Caco-2 (cell line): ENCODE measurements at regions of chr1 and their contacts with region 1.

Region 1: DNA sequence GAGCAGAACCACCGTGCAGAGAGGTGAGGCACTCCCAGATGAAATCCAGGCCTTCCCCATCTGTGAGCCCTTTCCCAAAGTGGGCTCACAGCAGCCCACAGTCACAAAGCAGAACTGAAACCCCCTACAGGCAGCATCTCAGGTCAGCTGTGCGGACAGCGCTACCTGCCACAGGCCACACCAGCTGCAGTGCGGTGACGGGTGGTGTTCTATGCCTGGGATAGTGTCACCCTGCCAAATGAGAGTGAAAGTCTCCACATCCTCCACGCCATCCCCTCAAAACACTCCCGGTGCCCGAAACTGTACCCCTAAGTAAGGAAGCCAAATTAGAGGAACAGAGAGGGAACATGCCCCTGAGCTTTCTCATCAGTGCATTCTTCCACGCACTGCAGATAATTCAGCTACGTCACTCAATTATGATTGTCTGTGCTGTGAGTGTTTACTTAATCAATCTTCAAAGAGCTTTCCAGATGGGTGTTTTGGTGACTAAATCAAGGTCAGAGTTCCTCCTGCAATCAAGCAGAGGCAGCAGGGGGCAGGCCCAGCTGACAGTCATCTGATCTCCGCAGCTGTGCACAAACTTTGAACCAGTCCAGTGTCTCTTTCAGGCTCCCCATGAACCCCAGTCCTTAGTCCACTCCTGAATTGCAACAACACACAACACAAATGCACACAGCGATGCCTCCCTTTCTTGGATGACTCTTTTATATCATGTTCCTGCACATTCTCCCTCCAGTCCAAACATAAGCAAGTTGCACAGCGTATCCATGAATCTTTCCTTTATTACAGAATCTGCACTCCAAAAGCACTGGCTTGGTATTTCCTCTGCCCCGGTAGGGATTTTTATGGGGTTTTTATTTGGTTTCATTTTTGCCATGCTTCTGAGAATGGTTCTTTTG is 150.0 kb downstream of the TOMM20 start:
- DNase-seq: peak; percentile 71 to 74
- H3K4me3 ChIP-seq: no peak overlapping the region
- H3K4me3 Mint-ChIP-seq: no peak overlapping the region
- H3K27ac Mint-ChIP-seq: peak overlapping the region; percentile 94
- H3K4me1 ChIP-seq: peaks cover 74% of the 10 kb centered on the region
- H3K4me1 Mint-ChIP-seq: peaks cover 66% of the 10 kb centered on the region
- H3K27me3 ChIP-seq: no peaks in the 10 kb centered on the region
- H3K27me3 Mint-ChIP-seq: no peaks in the 10 kb centered on the region
- CTCF ChIP-seq: peak; percentile 9 to 20

Region 2: GRCh38 chr1:234638832-234639799 is 339.5 kb before region 1 on chr1:
- CTCF ChIA-PET with region 1: no interaction called
- POLR2A ChIA-PET with region 1: no interaction called
- intact Hi-C with region 1: loop called (anchors 2 kb)
- DNase-seq: peak; percentile 90 to 93
- H3K4me3 ChIP-seq: no peak overlapping the region
- H3K4me3 Mint-ChIP-seq: peak overlapping the region; percentile 59
- H3K27ac Mint-ChIP-seq: peak overlapping the region; percentile 82
- H3K4me1 ChIP-seq: peaks cover 57% of the 10 kb centered on the region
- H3K4me1 Mint-ChIP-seq: peaks cover 42% of the 10 kb centered on the region
- H3K27me3 ChIP-seq: no peaks in the 10 kb centered on the region
- H3K27me3 Mint-ChIP-seq: no peaks in the 10 kb centered on the region
- CTCF ChIP-seq: no peak

Region 3: DNA sequence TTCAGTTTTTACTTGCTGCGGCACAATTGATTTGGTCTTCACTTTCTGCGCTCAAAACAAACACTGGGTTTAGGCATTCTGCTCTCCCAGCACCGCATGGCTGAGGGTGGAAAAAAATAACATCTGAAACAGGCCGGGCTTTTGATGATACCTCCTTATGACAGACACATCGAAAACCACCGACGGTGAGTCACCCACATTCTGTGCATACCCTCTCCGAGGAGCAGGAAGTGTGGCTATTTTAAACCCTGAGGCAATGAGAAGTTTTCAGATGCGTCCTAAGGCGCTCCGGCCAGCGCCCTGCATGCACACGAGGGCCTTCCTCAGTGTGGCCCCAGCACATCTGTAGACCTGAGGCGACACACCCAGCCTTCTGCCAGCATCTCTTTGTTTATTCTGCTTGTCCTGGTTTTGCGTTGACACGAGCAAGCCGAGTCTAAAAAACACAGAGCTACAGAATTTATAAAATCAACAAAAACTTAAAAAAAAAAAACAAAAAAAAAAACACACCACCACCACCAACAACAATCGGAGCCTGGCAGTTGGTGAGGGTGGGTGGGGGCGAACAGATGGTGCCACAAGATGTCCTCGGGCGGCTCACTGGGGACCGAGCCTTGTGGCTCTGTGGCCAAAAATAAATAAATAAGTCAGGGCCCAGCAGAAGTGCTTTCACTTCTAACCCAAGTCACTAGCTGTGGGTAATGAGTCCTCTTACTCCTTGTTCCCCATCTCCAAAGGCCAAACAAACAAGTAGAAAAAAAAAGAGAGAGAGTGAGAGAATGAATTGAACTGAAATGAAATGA is 206.1 kb before region 1 on chr1:
- CTCF ChIA-PET with region 1: no interaction called
- POLR2A ChIA-PET with region 1: no interaction called
- intact Hi-C with region 1: loop called (anchors 5 kb)
- DNase-seq: peak; percentile 87 to 95
- H3K4me3 ChIP-seq: no peak overlapping the region
- H3K4me3 Mint-ChIP-seq: peak overlapping the region; percentile 58
- H3K27ac Mint-ChIP-seq: peak overlapping the region; percentile 90
- H3K4me1 ChIP-seq: peaks cover 53% of the 10 kb centered on the region
- H3K4me1 Mint-ChIP-seq: peaks cover 51% of the 10 kb centered on the region
- H3K27me3 ChIP-seq: no peaks in the 10 kb centered on the region
- H3K27me3 Mint-ChIP-seq: no peaks in the 10 kb centered on the region
- CTCF ChIP-seq: no peak

Region 4: GRCh38 chr1:234875953-234876855 is 102.4 kb before region 1 on chr1:
- CTCF ChIA-PET with region 1: no interaction called
- POLR2A ChIA-PET with region 1: no interaction called
- intact Hi-C with region 1: loop called (anchors 1 kb)
- DNase-seq: peak; percentile 84 to 87
- H3K4me3 ChIP-seq: no peak overlapping the region
- H3K4me3 Mint-ChIP-seq: no peak overlapping the region
- H3K27ac Mint-ChIP-seq: peak overlapping the region; percentile 58
- H3K4me1 ChIP-seq: peaks cover 44% of the 10 kb centered on the region
- H3K4me1 Mint-ChIP-seq: peaks cover 35% of the 10 kb centered on the region
- H3K27me3 ChIP-seq: no peaks in the 10 kb centered on the region
- H3K27me3 Mint-ChIP-seq: no peaks in the 10 kb centered on the region
- CTCF ChIP-seq: no peak

Region 5: GRCh38 chr1:234997896-234998741 is 19.5 kb after region 1 on chr1:
- CTCF ChIA-PET with region 1: interaction called, 4 read pairs
- POLR2A ChIA-PET with region 1: no interaction called
- intact Hi-C with region 1: loop called (anchors 1 kb)
- DNase-seq: peak; percentile 81 to 90
- H3K4me3 ChIP-seq: no peak overlapping the region
- H3K4me3 Mint-ChIP-seq: peak overlapping the region; percentile 29
- H3K27ac Mint-ChIP-seq: peak overlapping the region; percentile 88
- H3K4me1 ChIP-seq: peaks cover 25% of the 10 kb centered on the region
- H3K4me1 Mint-ChIP-seq: peaks cover 22% of the 10 kb centered on the region
- H3K27me3 ChIP-seq: no peaks in the 10 kb centered on the region
- H3K27me3 Mint-ChIP-seq: no peaks in the 10 kb centered on the region
- CTCF ChIP-seq: peak in 1 of 2 experiments; percentile 5

Region 6: GRCh38 chr1:235060607-235061470 is 82.2 kb after region 1 on chr1:
- CTCF ChIA-PET with region 1: interaction called, 4 read pairs
- POLR2A ChIA-PET with region 1: interaction called, 17 read pairs
- intact Hi-C with region 1: loop called (anchors 2 kb)
- DNase-seq: peak; percentile 78 to 88
- H3K4me3 ChIP-seq: no peak overlapping the region
- H3K4me3 Mint-ChIP-seq: peak overlapping the region; percentile 51
- H3K27ac Mint-ChIP-seq: peak overlapping the region; percentile 95
- H3K4me1 ChIP-seq: peaks cover 41% of the 10 kb centered on the region
- H3K4me1 Mint-ChIP-seq: peaks cover 51% of the 10 kb centered on the region
- H3K27me3 ChIP-seq: no peaks in the 10 kb centered on the region
- H3K27me3 Mint-ChIP-seq: no peaks in the 10 kb centered on the region
- CTCF ChIP-seq: no peak

Region 7: GRCh38 chr1:235067263-235068172 is 88.9 kb after region 1 on chr1:
- CTCF ChIA-PET with region 1: no interaction called
- POLR2A ChIA-PET with region 1: no interaction called
- intact Hi-C with region 1: loop called (anchors 2 kb)
- DNase-seq: peak; percentile 67 to 87
- H3K4me3 ChIP-seq: no peak overlapping the region
- H3K4me3 Mint-ChIP-seq: peak overlapping the region; percentile 37
- H3K27ac Mint-ChIP-seq: peak overlapping the region; percentile 95
- H3K4me1 ChIP-seq: peaks cover 38% of the 10 kb centered on the region
- H3K4me1 Mint-ChIP-seq: peaks cover 38% of the 10 kb centered on the region
- H3K27me3 ChIP-seq: no peaks in the 10 kb centered on the region
- H3K27me3 Mint-ChIP-seq: no peaks in the 10 kb centered on the region
- CTCF ChIP-seq: no peak